ENCODE measurements at regions of chr7 and their contacts with region 1.

Region 1: DNA sequence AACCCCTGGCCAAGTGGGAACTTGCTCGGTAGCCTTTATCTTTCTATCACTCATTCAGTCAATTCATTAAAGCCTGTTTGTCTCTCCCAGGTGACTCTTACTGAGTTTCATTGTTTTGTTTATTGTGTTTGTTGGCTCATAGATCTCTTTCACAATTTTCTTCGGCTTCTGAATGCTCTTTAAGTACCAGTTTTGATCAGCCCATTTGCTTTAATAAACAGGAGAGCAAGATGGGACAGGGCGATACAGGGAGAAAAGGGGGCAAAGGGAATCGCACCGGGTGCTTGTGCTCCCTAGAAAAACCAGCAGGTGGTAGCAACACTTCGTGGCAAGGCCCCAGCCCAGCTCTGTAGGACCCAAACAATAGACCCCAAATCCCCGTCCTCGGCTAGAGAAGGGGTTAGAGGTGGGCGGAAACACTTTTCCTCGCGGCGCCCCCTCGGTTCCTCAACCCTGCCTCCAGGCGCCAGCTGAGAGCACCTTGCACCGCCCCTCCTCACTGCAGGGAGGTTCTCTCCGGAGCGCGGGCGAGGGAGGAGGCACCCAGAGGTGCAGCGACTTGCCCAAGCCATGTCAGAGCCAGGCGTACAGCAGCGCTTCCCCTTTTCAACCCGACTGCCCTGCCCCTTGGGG is 1.0 kb upstream of the EPHB6 start:
- DNase-seq: peak; percentile 91
- ATAC-seq: peak; percentile 88
- H3K4me3 ChIP-seq: peak overlapping the region; percentile 46 to 99 (median 92)
- H3K4me3 Mint-ChIP-seq: peak overlapping the region; percentile 99
- H3K27ac ChIP-seq: peak overlapping the region; percentile 82 to 86
- H3K27ac Mint-ChIP-seq: peak overlapping the region; percentile 99
- H3K4me1 ChIP-seq: peaks cover 12 to 24% of the 10 kb centered on the region in 2 donors
- H3K4me1 Mint-ChIP-seq: peaks cover 29% of the 10 kb centered on the region
- H3K27me3 ChIP-seq: no peaks in the 10 kb centered on the region
- H3K27me3 Mint-ChIP-seq: no peaks in the 10 kb centered on the region
- CTCF ChIP-seq: peak; percentile 89

Region 2: DNA sequence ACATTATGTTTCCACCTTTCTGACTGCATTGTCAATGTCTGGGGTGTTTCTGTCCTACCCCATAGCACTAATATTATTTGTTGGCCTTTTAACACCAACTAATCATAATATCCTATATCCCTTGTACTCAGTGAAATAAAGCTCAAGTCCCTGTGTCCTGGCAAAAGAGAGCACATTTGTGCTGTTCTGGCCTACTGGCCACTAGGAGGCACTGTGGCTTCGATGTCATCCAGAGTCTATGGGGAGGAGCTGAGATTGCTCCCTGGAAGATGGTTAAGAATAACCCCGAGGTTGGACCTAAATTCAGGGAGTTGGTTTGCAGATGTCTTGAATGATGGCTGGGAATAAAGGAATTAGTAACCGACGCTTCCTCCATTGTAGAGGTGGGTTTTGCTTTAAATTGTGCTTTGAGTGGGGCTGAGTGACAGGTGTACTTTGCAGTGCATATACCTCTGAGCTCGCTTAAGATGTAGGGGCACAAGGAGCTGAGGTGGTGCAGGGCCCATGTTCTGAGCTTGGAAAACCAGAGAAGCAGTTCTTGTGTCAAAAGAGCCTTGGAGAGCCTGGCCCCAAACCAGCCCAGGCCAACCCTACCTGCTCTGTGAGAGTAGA is 295.8 kb before region 1 on chr7:
- CTCF ChIA-PET with region 1: no interaction called
- POLR2A ChIA-PET with region 1: no interaction called
- intact Hi-C with region 1: no loop called
- DNase-seq: peak; percentile 46
- ATAC-seq: no peak
- H3K4me3 ChIP-seq: no peak overlapping the region
- H3K4me3 Mint-ChIP-seq: no peak overlapping the region
- H3K27ac ChIP-seq: no peak overlapping the region
- H3K27ac Mint-ChIP-seq: no peak overlapping the region
- H3K4me1 ChIP-seq: no peaks in the 10 kb centered on the region
- H3K4me1 Mint-ChIP-seq: no peaks in the 10 kb centered on the region
- H3K27me3 ChIP-seq: peaks cover 0 to 31% (median 14%) of the 10 kb centered on the region in 4 experiments
- H3K27me3 Mint-ChIP-seq: peaks cover 50% of the 10 kb centered on the region
- CTCF ChIP-seq: peak; percentile 79

Region 3: GRCh38 chr7:142603870-142604448 is 249.9 kb before region 1 on chr7:
- CTCF ChIA-PET with region 1: interaction called, 11 read pairs
- POLR2A ChIA-PET with region 1: no interaction called
- intact Hi-C with region 1: no loop called
- DNase-seq: peak; percentile 72
- ATAC-seq: peak; percentile 63
- H3K4me3 ChIP-seq: no peak overlapping the region
- H3K4me3 Mint-ChIP-seq: no peak overlapping the region
- H3K27ac ChIP-seq: no peak overlapping the region
- H3K27ac Mint-ChIP-seq: no peak overlapping the region
- H3K4me1 ChIP-seq: no peaks in the 10 kb centered on the region
- H3K4me1 Mint-ChIP-seq: no peaks in the 10 kb centered on the region
- H3K27me3 ChIP-seq: peaks cover 0 to 2% (median 0%) of the 10 kb centered on the region in 4 experiments
- H3K27me3 Mint-ChIP-seq: peaks cover 32% of the 10 kb centered on the region
- CTCF ChIP-seq: peak; percentile 93

Region 4: DNA sequence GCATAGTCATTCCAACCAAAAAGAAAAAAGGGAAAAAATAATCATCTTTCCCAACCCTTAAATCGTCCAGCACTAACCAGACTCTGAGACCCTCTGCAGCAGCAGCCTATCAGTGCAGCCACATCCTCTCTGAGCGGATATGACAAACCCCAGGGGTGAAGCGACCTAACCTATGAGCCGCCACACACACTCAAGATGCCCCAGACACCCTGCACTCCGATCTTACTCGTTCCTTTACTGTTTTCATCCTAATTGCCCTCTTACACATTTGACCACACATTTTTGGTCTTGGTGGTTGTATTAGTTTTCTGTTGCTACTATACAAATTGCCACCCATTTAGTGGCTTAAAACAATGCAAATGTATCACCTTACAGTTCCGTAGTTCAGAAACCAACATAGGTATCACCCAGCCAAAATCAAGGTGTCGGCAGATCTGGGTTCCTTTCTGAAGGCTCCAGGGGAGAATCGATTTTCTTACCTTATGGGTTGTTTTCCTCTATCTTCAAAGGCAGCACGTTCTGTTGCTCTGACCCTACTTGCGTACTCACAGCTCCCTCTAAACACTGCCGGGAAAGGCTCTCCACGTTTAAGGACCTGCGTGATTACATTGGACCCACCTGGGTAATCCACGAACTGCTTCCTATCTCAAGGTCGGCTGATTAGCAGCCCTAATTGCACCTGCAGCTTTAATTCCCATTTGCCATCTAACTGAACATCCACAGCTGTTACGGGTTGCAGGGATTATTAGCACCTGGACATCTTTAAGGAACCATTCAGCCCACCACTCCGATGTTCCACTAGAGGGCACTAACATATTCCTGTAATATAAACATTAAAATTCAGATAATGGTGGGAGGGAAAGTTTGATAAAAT is 141.9 kb before region 1 on chr7:
- CTCF ChIA-PET with region 1: interaction called, 7 read pairs
- POLR2A ChIA-PET with region 1: interaction called, 3 read pairs
- intact Hi-C with region 1: loop called (anchors 5 kb)
- DNase-seq: peak; percentile 55
- ATAC-seq: peak; percentile 39
- H3K4me3 ChIP-seq: peak overlapping the region in 1 of 5 experiments; percentile 35
- H3K4me3 Mint-ChIP-seq: peak overlapping the region; percentile 66
- H3K27ac ChIP-seq: no peak overlapping the region
- H3K27ac Mint-ChIP-seq: peak overlapping the region; percentile 42
- H3K4me1 ChIP-seq: peaks cover 17 to 25% of the 10 kb centered on the region in 2 donors
- H3K4me1 Mint-ChIP-seq: peaks cover 24% of the 10 kb centered on the region
- H3K27me3 ChIP-seq: no peaks in the 10 kb centered on the region
- H3K27me3 Mint-ChIP-seq: peaks cover 4% of the 10 kb centered on the region
- CTCF ChIP-seq: peak; percentile 84

Region 5: DNA sequence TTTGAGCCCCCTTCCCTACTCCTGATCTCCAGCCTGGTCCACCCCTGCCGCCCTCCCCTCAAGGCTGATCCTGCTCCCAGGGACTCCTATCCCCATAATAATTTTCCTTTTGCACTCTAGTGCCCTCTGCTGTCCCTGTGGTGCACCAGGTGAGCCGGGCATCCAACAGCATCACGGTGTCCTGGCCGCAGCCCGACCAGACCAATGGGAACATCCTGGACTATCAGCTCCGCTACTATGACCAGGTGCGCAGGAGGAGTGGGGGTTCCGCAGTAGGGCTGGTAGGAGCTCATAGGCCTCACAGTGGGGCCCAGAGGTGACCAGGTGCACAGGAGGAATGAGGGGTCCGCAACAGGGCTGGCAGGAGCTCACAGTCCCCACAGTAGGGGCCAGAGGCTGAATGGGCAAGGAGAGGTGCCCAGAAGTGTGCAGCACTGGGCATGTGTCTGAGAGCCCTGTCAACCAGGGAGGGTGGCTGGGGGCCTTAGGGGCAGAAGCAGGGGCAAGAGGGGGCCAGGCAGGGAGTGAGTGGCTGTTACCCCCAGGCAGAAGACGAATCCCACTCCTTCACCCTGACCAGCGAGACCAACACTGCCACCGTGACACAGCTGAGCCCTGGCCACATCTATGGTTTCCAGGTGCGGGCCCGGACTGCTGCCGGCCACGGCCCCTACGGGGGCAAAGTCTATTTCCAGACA is 12.7 kb after region 1 on chr7:
- CTCF ChIA-PET with region 1: interaction called, 28 read pairs
- POLR2A ChIA-PET with region 1: interaction called, 7 read pairs
- intact Hi-C with region 1: loop called (anchors 1 kb)
- DNase-seq: peak; percentile 29
- ATAC-seq: no peak
- H3K4me3 ChIP-seq: no peak overlapping the region
- H3K4me3 Mint-ChIP-seq: no peak overlapping the region
- H3K27ac ChIP-seq: no peak overlapping the region
- H3K27ac Mint-ChIP-seq: no peak overlapping the region
- H3K4me1 ChIP-seq: no peaks in the 10 kb centered on the region
- H3K4me1 Mint-ChIP-seq: peaks cover 3% of the 10 kb centered on the region
- H3K27me3 ChIP-seq: no peaks in the 10 kb centered on the region
- H3K27me3 Mint-ChIP-seq: no peaks in the 10 kb centered on the region
- CTCF ChIP-seq: peak; percentile 24

Region 6: DNA sequence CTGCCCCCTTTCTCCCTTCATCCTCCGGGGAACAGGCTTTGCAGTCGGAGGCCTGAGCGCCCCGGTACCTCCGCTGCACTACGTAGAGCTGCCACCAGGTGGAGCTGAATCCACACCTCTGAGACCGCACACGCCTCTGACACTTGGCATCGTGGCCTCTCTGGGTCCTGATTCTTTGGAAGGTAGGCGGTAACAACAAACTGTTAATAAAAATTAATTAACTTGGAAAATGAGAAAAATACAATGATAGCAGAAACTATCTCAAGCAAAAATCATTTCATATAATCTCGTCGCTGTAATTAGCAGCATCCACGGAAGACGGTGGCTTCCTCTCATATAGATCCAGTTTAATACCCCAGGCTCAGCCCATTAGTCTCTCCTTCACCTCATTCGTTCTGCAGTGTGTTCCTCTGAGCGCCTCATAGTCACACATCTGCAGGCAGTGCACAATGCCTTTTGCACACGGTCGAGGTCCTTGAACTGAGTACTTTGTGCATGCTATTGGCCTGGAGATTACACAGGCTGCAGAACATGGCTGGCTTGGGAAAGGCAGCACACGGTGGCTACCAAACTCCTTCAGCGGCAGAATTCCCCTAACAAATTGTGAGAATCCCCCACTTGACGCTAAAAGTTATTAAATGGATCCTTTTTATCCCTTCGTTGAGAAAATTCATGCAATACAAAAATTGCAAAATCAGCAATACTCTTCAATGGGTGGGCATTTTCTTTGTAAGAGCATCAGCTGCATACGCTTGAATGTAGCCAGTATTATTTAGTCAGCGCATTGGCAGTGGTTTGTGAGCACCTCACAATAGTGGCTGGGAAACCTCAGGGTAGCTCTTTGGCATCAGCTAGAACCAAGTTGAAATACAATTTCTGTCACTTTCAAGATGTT is 154.4 kb after region 1 on chr7:
- CTCF ChIA-PET with region 1: interaction called, 21 read pairs
- POLR2A ChIA-PET with region 1: no interaction called
- intact Hi-C with region 1: loop called (anchors 1 kb)
- DNase-seq: peak; percentile 88
- ATAC-seq: peak; percentile 96
- H3K4me3 ChIP-seq: no peak overlapping the region
- H3K4me3 Mint-ChIP-seq: no peak overlapping the region
- H3K27ac ChIP-seq: no peak overlapping the region
- H3K27ac Mint-ChIP-seq: no peak overlapping the region
- H3K4me1 ChIP-seq: peaks cover 36 to 49% of the 10 kb centered on the region in 2 donors
- H3K4me1 Mint-ChIP-seq: peaks cover 49% of the 10 kb centered on the region
- H3K27me3 ChIP-seq: no peaks in the 10 kb centered on the region
- H3K27me3 Mint-ChIP-seq: no peaks in the 10 kb centered on the region
- CTCF ChIP-seq: peak; percentile 92

Region 7: DNA sequence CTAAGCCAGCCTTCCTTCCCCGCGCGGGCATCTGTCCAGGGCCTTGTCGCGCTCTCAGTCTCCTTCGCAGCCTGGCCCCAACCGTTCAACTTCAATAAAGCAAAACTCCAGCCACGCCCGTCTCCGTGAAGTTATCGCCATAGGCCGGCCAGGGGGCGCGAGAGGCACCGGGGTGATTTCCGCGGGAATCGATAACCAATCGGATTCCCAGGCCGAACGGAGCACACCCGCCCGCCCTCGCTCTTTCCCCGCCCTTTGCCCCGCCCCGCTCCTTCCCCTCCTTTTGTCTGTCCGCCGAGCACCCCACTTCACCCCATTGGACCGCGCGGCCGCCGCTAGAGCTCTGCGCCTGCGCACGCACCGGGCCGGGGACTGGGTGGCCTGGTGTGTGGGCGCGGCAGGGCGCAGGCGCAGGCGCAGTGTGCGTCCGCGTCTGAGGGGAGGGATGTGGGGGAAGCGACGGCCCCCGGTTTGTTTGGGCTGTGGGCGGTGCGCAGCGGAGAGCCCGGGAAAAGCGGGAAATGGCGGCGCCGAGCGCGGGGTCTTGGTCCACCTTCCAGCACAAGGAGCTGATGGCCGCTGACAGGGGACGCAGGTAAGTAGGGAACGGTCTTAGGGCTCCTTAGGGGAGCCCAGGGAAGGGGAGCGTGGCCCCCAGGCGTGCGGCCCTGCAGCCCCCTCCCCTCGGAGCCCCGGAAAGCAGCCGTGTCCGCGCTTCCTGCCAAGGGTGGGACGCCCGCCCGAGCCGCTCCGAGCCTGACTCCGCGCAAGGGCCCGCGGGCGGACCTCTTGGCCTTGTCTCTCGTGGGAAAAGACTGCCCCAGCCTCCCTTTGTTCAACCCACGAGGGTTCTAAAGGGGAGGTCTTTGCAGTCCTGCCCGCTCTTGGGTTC is 434.3 kb after region 1 on chr7 and contains the start of gene CASP2:
- CTCF ChIA-PET with region 1: no interaction called
- POLR2A ChIA-PET with region 1: interaction called, 4 read pairs
- intact Hi-C with region 1: loop called (anchors 2 kb)
- DNase-seq: peak; percentile 99
- ATAC-seq: peak; percentile 90
- H3K4me3 ChIP-seq: peak within 1 kb of the TSS; percentile 73 to 95 (median 91)
- H3K4me3 Mint-ChIP-seq: peak within 1 kb of the TSS; percentile 95
- H3K27ac ChIP-seq: peak within 1 kb of the TSS; percentile 82 to 86
- H3K27ac Mint-ChIP-seq: peak within 1 kb of the TSS; percentile 84
- H3K4me1 ChIP-seq: peaks cover 42 to 43% of the 10 kb centered on the region in 2 donors
- H3K4me1 Mint-ChIP-seq: peaks cover 59% of the 10 kb centered on the region
- H3K27me3 ChIP-seq: no peaks in the 10 kb centered on the region
- H3K27me3 Mint-ChIP-seq: no peaks in the 10 kb centered on the region
- CTCF ChIP-seq: peak; percentile 36
- total RNA-seq, gene CASP2: 66.5 and 71.1 TPM in 2 replicates

Region 8: DNA sequence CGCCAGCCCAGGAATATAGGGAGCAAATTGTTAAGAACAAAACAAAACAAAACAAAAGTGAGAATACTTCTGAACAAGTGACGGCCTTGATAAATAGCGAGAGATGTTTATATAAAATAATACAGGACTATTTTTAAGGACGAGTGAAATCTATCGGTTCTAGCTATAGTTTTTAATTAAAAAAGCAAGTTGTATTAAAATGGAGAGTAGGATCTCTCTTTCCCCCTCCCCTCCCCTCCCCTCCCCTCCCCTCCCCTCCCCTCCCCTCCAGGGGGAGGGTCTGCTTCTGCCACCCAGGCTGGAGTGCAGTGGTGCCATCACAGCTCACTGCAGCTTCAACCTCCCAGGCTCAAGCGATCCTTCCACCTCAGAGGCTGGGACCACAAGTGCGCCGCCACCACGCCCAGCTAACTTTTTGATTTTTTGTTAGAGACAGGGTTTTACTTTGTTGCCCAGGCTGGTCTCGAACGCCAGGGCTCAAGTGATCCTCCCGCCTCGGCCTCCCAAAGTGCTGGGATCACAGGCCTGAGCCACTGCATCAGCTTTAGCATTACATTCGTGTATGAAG is 1048.6 kb after region 1 on chr7:
- CTCF ChIA-PET with region 1: no interaction called
- POLR2A ChIA-PET with region 1: no interaction called
- intact Hi-C with region 1: no loop called
- DNase-seq: no peak
- ATAC-seq: no peak
- H3K4me3 ChIP-seq: peak overlapping the region in 4 of 5 experiments; percentile 68 to 96 (median 88)
- H3K4me3 Mint-ChIP-seq: peak overlapping the region; percentile 99
- H3K27ac ChIP-seq: peak overlapping the region; percentile 34 to 67
- H3K27ac Mint-ChIP-seq: peak overlapping the region; percentile 95
- H3K4me1 ChIP-seq: peaks cover 6 to 10% of the 10 kb centered on the region in 2 donors
- H3K4me1 Mint-ChIP-seq: peaks cover 24% of the 10 kb centered on the region
- H3K27me3 ChIP-seq: no peaks in the 10 kb centered on the region
- H3K27me3 Mint-ChIP-seq: no peaks in the 10 kb centered on the region
- CTCF ChIP-seq: no peak

Measured in B cell (primary cell).